Right ventricle myocardium superior (tissue), 1 donor: ENCODE measurements at regions of chr2 and their contacts with region 1.

Region 1: GRCh38 chr2:54455563-54456361 is at the start of gene SPTBN1:
- DNase-seq: peak; percentile 94
- ATAC-seq: peak; percentile 92
- total RNA-seq, gene SPTBN1: 391 TPM

Region 2: GRCh38 chr2:54341656-54342055 is 114.1 kb before region 1 on chr2:
- intact Hi-C with region 1: loop called (anchors 5 kb)
- DNase-seq: no peak
- ATAC-seq: peak; percentile 69

Region 3: DNA sequence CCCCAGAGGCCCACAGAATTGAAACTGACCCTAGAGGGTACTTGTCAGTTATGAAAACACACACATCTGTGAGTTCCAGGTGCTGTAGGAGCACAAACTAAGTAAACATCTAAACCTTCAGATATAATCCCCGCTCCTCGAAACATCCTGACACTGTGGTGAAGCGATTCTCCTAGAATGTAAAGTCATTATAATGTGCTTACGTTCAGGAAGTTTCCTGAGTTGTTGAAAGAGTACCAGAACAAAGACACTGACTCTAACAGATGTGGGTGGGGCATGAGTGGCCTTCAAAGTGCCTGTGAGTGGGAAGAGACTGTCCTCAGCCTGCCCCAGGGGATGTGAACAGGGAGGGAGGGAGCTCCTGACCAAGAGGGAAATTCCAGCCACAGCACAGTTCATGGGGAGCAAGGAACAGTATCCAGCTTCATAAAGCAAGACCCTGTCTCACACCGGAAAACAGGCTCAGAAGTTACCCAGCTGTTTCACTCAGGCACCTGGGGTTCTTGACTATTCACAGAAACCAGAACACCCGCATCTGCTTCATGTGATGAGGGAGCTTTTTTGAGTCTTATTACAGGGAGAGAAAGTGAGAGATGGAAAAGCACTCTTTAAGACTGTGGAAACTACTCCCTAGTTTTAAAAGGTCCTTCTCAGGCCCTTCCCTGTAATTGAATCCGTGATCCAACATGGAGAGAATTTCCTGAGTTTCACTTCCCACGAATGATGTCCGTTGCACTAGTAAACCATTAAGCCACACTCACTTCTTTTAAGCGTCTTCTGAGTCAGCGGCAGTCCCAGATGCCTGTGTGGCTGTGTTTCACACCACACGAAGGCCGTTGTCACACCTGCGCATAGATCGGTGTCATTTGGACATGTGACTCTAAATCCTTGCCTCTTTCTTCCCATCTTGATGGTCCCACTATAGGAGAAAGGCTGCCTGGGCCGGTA is 179.1 kb after region 1 on chr2:
- intact Hi-C with region 1: loop called (anchors 10 kb)
- DNase-seq: peak; percentile 59
- ATAC-seq: peak; percentile 48

Region 4: DNA sequence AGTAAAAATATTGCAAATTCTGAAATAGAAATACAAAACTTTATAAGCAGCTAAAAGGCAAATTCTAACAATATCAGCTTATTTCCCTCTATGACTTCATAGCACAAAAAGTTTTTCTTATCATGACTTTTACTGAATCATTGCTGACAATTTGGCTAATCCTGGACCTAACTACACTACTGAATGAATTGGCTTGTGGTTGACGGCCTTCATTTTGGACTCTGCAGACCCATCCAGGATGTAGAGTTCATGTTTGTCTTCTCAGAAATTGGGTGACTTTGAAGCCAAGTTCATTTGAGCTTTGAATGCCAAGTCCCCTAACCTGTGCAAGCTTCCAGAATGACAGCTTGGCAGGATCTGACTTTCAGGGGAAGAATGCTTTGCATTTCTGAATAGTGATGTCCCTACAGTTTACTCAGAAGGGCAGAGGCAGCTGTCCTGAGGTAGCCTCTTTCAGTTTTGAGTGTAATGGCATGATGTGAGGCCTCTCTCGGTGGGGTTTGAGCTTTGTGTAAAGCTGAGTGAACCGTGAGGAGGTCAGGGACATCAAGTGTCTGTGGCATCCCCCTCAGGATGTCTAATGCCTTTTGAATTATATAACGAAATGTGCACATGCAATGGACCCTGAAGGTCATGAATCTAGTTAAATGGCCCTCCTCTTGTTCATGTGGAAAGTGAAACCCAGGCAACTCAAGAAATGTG is 1419.8 kb after region 1 on chr2:
- intact Hi-C with region 1: no loop called
- DNase-seq: no peak
- ATAC-seq: peak; percentile 55